ENCODE measurements at regions of chr11 and their contacts with region 1.

Region 1: DNA sequence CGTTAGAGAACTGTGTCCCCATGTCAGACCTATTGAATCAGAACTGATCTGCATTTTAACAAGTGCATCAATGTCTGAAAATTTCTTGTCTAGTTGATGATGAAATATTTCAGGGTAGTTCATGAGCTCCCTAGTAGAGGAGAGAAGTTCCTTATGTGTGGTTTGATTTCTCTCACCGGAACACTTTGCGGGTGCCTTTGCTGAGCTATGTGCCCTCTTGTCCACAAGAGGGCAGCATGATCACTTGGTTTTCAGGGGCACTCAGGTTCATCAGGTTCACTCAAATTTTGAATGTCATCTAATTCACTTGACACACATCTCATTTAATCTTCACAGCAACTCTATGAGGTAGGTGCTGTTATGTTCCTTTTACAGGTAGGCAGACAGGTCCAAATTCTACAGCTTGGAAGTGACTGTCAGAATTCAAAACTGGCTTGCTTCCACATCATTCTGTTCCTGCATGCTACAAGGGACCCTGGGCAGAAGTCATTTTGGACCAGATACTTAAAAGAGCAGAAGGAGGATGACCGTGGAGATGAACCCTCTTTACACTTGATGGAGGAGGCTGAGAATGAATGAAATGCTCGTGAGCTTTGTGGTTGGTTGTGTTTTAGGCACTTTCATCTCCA is 55.6 kb downstream of the P4HA3 start:
- DNase-seq: peak; percentile 48
- H3K4me3 ChIP-seq: no peak overlapping the region
- H3K27ac ChIP-seq: no peak overlapping the region
- H3K4me1 ChIP-seq: peaks cover 11% of the 10 kb centered on the region
- H3K27me3 ChIP-seq: no peaks in the 10 kb centered on the region
- CTCF ChIP-seq: peak; percentile 59 to 88 (median 86)
- POLR2A ChIP-seq: no peak

Region 2: DNA sequence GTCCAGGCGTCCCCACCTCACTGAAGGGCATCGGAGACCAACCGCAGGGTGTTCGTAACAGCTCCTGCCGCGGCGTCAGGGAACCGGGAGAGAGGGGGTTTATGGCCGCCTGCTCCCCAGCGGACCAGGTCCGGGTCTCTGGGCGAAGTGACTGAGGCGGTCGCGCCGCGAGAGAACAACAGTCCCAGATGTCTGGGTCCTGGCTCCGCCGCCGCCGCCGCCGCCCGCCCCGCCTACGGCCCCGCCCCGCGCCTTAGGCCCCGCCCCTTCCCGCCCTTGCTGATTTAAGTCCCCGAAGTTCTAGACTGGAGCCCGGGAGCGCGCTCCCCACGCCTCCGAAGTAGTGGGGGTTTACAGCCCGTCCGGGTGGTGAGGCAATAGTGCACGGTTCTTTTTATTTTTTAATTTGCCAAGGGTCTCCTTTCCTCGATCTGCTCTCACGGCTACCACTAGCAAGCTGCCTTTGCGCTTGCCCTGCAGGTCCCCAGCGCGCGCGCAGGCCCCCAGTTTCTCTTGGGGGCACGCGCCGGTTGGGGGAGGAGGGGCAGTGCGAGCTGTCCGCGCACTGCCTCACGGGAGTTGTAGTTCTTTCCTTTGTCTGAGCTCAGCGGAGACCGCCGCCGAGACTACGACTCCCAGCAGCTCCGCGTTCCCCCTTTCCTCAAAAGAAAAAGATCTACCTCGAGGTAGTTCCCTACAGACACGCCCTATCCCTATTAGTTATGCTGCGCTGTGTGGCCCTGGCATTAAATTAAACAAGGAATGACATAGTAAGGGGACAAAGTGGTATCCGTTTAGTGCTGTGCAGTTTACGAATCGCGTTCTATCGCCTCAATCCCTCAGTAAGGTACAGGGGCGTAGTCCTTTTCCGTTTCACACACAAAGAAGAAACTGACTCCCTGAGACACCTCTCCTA is 142.6 kb after region 1 on chr11 and contains the start of gene PGM2L1:
- intact Hi-C with region 1: loop called (anchors 5 kb)
- DNase-seq: peak; percentile 95
- H3K4me3 ChIP-seq: peak within 1 kb of the TSS; percentile 75 to 90
- H3K27ac ChIP-seq: peak within 1 kb of the TSS; percentile 88 to 91
- H3K4me1 ChIP-seq: no peaks in the 10 kb centered on the region
- H3K27me3 ChIP-seq: no peaks in the 10 kb centered on the region
- CTCF ChIP-seq: peak in 2 of 4 experiments; percentile 6 to 20
- POLR2A ChIP-seq: peak; percentile 78
- total RNA-seq, gene PGM2L1: 3.6 to 4.3 TPM

Region 3: GRCh38 chr11:74559934-74560309 is 304.1 kb after region 1 on chr11:
- intact Hi-C with region 1: loop called (anchors 10 kb)
- DNase-seq: no peak
- H3K4me3 ChIP-seq: no peak overlapping the region
- H3K27ac ChIP-seq: no peak overlapping the region
- H3K4me1 ChIP-seq: no peaks in the 10 kb centered on the region
- H3K27me3 ChIP-seq: no peaks in the 10 kb centered on the region
- CTCF ChIP-seq: no peak
- POLR2A ChIP-seq: no peak